ENCODE measurements at regions of chr15 and their contacts with region 1.

Region 1: GRCh38 chr15:44738340-44738984 is 2.1 kb downstream of the TRIM69 start:
- DNase-seq: peak in 1 of 2 donors; percentile 73
- H3K4me3 ChIP-seq: no peak overlapping the region
- H3K27ac ChIP-seq: peak overlapping the region in 2 of 5 donors; percentile 22 to 48
- H3K4me1 ChIP-seq: peaks cover 0 to 24% (median 3%) of the 10 kb centered on the region in 4 donors
- H3K27me3 ChIP-seq: no peaks in the 10 kb centered on the region
- CTCF ChIP-seq: peak in 5 of 7 experiments; percentile 28 to 71 (median 69)
- EP300 ChIP-seq: no peak
- POLR2A ChIP-seq: no peak

Region 2: DNA sequence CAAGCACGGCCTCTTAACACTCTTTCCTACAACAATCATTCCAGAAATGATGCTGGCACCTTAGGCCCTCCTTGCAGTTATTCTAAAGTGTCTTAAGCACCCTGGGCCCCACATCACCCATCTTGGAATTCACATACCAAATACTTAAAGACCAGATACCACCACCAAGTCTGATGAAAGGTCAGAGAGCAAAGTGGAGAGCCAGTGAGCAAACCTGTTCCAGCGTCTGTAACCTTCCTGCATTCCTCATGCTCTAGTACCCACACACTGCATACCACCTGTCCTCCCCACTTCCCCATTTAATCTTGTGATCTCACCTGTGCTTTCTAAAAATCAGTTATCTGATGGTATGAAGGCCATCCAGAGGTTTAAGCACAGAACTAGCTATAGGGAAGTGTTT is 68.0 kb before region 1 on chr15:
- intact Hi-C with region 1: loop called (anchors 5 kb)
- DNase-seq: no peak
- H3K4me3 ChIP-seq: no peak overlapping the region
- H3K27ac ChIP-seq: peak overlapping the region in 1 of 5 donors; percentile 12
- H3K4me1 ChIP-seq: no peaks in the 10 kb centered on the region
- H3K27me3 ChIP-seq: no peaks in the 10 kb centered on the region
- CTCF ChIP-seq: no peak
- EP300 ChIP-seq: no peak
- POLR2A ChIP-seq: no peak

Measured in stomach (tissue), 19 donors.